Tibial artery (tissue), 4 donors: ENCODE measurements at regions of chr15 and their contacts with region 1.

Region 1: DNA sequence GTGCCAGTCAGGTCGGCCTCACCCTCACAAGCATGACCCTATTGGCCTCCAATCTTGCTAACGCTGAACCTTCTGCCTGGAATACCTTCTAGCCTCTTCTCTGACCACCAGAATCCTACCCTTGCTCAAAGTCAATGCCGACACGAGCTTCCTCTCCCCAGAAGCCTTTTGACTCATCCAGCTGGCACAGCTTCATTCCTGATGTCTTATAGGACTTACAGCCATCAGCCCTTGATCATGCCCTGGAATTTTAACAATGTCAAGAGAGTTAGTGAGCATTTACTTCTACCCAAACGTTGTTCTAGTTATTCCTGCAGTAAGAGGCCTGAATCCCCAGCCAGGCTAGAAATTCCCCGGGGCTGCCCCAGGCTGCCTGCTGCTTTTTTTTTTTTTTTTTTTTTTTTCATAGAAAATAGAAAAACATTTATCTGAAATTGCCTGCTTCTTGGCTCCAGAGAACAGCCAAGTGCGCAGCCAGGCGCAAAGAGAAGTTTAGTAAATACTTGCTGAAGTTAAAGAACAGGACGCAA is 3.9 kb downstream of the CYP1A2 start:
- DNase-seq: no peak
- H3K4me3 ChIP-seq: no peak overlapping the region
- H3K27ac ChIP-seq: no peak overlapping the region
- H3K4me1 ChIP-seq: no peaks in the 10 kb centered on the region
- H3K27me3 ChIP-seq: peaks cover 0 to 9% of the 10 kb centered on the region in 2 donors
- CTCF ChIP-seq: no peak

Region 2: GRCh38 chr15:74396445-74397238 is 355.9 kb before region 1 on chr15:
- intact Hi-C with region 1: loop called (anchors 5 kb)
- DNase-seq: no peak
- H3K4me3 ChIP-seq: no peak overlapping the region
- H3K27ac ChIP-seq: no peak overlapping the region
- H3K4me1 ChIP-seq: no peaks in the 10 kb centered on the region
- H3K27me3 ChIP-seq: peaks cover 0 to 15% of the 10 kb centered on the region in 2 donors
- CTCF ChIP-seq: no peak

Region 3: GRCh38 chr15:74889883-74890664 is 137.5 kb after region 1 on chr15 and contains the start of gene MPI:
- intact Hi-C with region 1: no loop called
- DNase-seq: peak; percentile 85 to 90
- H3K4me3 ChIP-seq: peak within 1 kb of the TSS; percentile 85 to 99
- H3K27ac ChIP-seq: peak within 1 kb of the TSS; percentile 91 to 92
- H3K4me1 ChIP-seq: peaks cover 0 to 19% (median 16%) of the 10 kb centered on the region in 4 donors
- H3K27me3 ChIP-seq: no peaks in the 10 kb centered on the region
- CTCF ChIP-seq: peak; percentile 27 to 62

Region 4: GRCh38 chr15:74928771-74929198 is 176.2 kb after region 1 on chr15:
- intact Hi-C with region 1: no loop called
- DNase-seq: no peak
- H3K4me3 ChIP-seq: no peak overlapping the region
- H3K27ac ChIP-seq: no peak overlapping the region
- H3K4me1 ChIP-seq: no peaks in the 10 kb centered on the region
- H3K27me3 ChIP-seq: no peaks in the 10 kb centered on the region
- CTCF ChIP-seq: no peak